HepG2 (cell line): ENCODE measurements at regions of chr11 and their contacts with region 1.

Region 1: GRCh38 chr11:62573592-62574362 is at the start of gene EEF1G:
- DNase-seq: peak; percentile 99
- ATAC-seq: peak; percentile 93
- H3K4me3 ChIP-seq: peak within 1 kb of the TSS; percentile 80 to 96 (median 95)
- H3K27ac ChIP-seq: peak within 1 kb of the TSS; percentile 85
- H3K4me1 ChIP-seq: peaks cover 63% of the 10 kb centered on the region
- H3K27me3 ChIP-seq: no peaks in the 10 kb centered on the region; a peak in 1 of 5 replicates
- CTCF ChIP-seq: no peak; the same call in 1 of the 2 replicates
- EP300 ChIP-seq: no peak
- POLR2A ChIP-seq: peak; percentile 89 to 91
- RAD21 ChIP-seq: no peak
- total RNA-seq, gene EEF1G: 1,787 and 2,092 TPM in 2 replicates

Region 2: GRCh38 chr11:62542750-62543567 is 30.8 kb before region 1 on chr11:
- CTCF ChIA-PET with region 1: no interaction called
- POLR2A ChIA-PET with region 1: interaction called, 45 read pairs
- in situ Hi-C with region 1: no loop called
- intact Hi-C with region 1: no loop called
- DNase-seq: no peak
- ATAC-seq: peak; percentile 35
- H3K4me3 ChIP-seq: peak overlapping the region; percentile 33 to 93 (median 79)
- H3K27ac ChIP-seq: peak overlapping the region; percentile 19
- H3K4me1 ChIP-seq: peaks cover 60% of the 10 kb centered on the region
- H3K27me3 ChIP-seq: no peaks in the 10 kb centered on the region
- CTCF ChIP-seq: peak; percentile 97
- EP300 ChIP-seq: no peak
- POLR2A ChIP-seq: 0 out of 4 replicates have a peak, but pooled peaks of 1 of the 2 experiments have one; percentile 11
- RAD21 ChIP-seq: peak; percentile 98

Region 3: DNA sequence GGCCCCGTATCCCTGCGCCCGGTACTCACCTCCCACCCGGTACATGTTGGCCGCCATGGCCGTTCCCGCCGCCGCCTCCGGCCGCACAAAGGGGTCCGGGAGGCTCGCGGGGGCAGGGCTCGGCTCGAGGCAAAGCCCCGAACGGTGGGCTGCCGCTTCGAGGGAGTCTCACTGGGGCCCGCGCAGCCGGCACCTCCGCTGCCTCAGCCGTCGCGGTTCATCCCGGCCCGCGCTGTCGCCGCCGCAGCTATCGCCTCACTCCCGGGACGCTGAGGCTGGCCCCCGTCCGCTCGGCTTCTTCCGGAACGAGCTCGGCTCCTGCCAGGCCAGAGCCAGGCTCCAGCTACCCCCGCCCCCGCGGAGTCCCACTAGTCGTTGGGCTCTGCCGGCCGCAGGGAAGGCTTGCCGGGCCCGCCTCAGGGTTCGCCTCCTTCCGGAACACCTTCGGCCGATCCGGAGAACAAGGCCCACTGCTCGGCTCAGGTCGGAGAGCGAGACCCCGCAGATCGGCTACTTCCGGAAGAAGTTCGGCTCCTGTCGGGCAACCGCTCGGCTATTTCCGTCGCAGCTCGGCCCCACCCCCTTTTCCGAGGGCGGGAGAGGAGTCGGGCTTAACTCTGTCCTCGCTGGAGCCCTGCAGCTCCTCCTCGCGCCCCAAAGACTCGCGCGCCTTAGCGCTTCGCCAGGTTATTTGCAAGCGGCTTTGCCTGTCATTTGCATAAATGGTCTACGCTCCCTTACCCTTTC is 27.8 kb after region 1 on chr11 and contains the start of gene MTA2:
- CTCF ChIA-PET with region 1: no interaction called
- POLR2A ChIA-PET with region 1: interaction called, 25 read pairs
- in situ Hi-C with region 1: no loop called
- intact Hi-C with region 1: no loop called
- DNase-seq: peak; percentile 94
- ATAC-seq: peak; percentile 93
- H3K4me3 ChIP-seq: peak within 1 kb of the TSS; percentile 91 to 94 (median 94)
- H3K27ac ChIP-seq: peak within 1 kb of the TSS; percentile 88
- H3K4me1 ChIP-seq: peaks cover 43% of the 10 kb centered on the region
- H3K27me3 ChIP-seq: no peaks in the 10 kb centered on the region; a peak in 1 of 5 replicates
- CTCF ChIP-seq: 0 out of 2 replicates have a peak, but pooled peaks have one; percentile 2
- EP300 ChIP-seq: no peak
- POLR2A ChIP-seq: peak in 1 of 2 experiments; percentile 72; a peak in 2 of 4 replicates
- RAD21 ChIP-seq: no peak
- total RNA-seq, gene MTA2: 58.1 and 70.0 TPM in 2 replicates

Region 4: GRCh38 chr11:62621567-62622470 is 48.0 kb after region 1 on chr11 and contains the start of gene B3GAT3:
- CTCF ChIA-PET with region 1: no interaction called
- POLR2A ChIA-PET with region 1: interaction called, 21 read pairs
- in situ Hi-C with region 1: no loop called
- intact Hi-C with region 1: no loop called
- DNase-seq: peak; percentile 95
- ATAC-seq: peak; percentile 95
- H3K4me3 ChIP-seq: peak within 1 kb of the TSS; percentile 74 to 90 (median 81)
- H3K27ac ChIP-seq: peak within 1 kb of the TSS; percentile 72
- H3K4me1 ChIP-seq: peaks cover 21% of the 10 kb centered on the region
- H3K27me3 ChIP-seq: no peaks in the 10 kb centered on the region; a peak in 1 of 5 replicates
- CTCF ChIP-seq: peak; percentile 39
- EP300 ChIP-seq: 0 out of 4 replicates have a peak, but pooled peaks of 1 of the 2 experiments have one; percentile 18
- POLR2A ChIP-seq: peak; percentile 42 to 89
- RAD21 ChIP-seq: peak; percentile 20
- total RNA-seq, gene B3GAT3: 8.4 and 21.3 TPM in 2 replicates

Region 5: DNA sequence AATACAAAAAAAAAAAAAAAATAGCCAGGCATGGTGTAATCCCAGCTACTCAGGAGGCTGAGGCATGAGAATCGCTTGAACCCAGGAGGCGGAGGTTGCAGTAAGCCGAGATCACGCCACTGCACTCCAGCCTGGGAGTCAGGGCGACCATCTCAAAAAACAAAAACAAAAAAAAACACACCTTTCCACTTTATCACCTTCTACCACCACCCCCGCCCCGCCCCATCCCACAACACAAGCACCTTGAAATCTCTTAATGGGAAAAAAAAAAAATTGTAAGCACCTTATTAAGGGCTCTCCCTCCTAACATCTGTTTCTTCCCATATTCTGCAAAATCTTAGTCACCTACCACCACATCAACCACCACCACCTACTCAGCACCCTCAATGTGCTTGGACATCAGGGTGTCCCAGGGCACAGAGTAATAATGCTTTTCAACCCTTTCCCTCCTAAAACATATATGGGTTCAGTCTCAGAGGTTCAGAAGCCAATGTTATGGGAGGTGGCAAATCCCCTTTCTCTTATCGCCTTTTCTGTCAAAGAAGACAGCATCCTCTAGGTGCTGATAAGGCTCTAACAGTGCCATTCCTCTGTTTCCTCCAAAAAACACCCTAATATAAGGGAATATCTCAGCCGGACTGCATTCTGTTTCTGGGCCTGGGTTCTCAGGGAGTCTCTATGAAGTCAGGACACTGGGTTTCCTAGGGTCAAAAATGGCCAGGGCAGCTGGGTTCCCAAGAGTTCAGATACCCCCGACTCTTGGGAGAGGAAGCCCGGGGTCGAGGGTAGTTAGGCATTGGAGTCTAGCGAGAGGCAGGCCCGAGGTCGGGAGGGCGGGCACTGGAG is 78.6 kb after region 1 on chr11:
- CTCF ChIA-PET with region 1: no interaction called
- POLR2A ChIA-PET with region 1: interaction called, 14 read pairs
- in situ Hi-C with region 1: no loop called
- intact Hi-C with region 1: no loop called
- DNase-seq: no peak
- ATAC-seq: peak; percentile 16
- H3K4me3 ChIP-seq: peak overlapping the region; percentile 88 to 92 (median 89)
- H3K27ac ChIP-seq: peak overlapping the region; percentile 84
- H3K4me1 ChIP-seq: peaks cover 39% of the 10 kb centered on the region
- H3K27me3 ChIP-seq: no peaks in the 10 kb centered on the region
- CTCF ChIP-seq: no peak
- EP300 ChIP-seq: no peak
- POLR2A ChIP-seq: no peak
- RAD21 ChIP-seq: no peak

Region 6: GRCh38 chr11:62753736-62754603 is 180.2 kb after region 1 on chr11 and contains the start of gene ZBTB3:
- CTCF ChIA-PET with region 1: no interaction called
- POLR2A ChIA-PET with region 1: interaction called, 13 read pairs
- in situ Hi-C with region 1: no loop called
- intact Hi-C with region 1: no loop called
- DNase-seq: peak; percentile 99
- ATAC-seq: peak; percentile 96
- H3K4me3 ChIP-seq: peak within 1 kb of the TSS; percentile 55 to 86 (median 81)
- H3K27ac ChIP-seq: peak within 1 kb of the TSS; percentile 75
- H3K4me1 ChIP-seq: peaks cover 35% of the 10 kb centered on the region
- H3K27me3 ChIP-seq: no peaks in the 10 kb centered on the region
- CTCF ChIP-seq: peak; percentile 29; the same call in 1 of the 2 replicates
- EP300 ChIP-seq: no peak
- POLR2A ChIP-seq: peak; percentile 83 to 88
- RAD21 ChIP-seq: no peak; the same call in 1 of the 2 replicates
- total RNA-seq, gene ZBTB3: 4.0 and 5.2 TPM in 2 replicates